ENCODE measurements at regions of chr1 and their contacts with region 1.

Region 1: GRCh38 chr1:89085781-89086180 is 20.8 kb upstream of the GBP1 start:
- DNase-seq: peak; percentile 64
- CTCF ChIP-seq: peak; percentile 70

Region 2: DNA sequence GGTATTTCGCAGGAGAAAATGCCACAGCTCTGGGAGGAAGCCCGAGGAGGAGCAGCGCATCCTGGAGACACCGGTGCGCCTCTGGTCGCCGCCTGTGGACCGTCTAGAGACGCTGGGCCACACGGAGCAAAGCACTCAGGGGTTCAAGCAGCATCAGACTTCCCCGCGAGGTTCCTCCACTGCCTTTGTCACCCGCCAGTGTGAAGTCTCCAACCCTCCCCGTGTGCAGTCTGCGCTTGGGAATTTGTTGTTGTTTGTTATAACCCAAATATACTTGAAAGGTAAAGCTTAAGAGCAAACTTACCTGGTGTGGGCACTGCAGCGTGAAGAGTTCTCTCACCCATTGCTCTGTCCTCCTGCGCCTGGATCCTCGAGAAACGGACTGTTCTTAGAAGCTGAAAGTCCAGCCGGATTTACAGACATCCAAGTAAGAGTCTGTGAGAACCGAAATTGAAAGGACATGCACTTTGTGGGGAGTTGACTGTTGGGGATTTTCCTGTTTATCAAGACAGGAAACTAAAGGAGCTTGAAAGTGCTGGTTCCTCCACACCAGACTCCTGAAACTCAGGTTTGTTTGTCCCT is 112.8 kb after region 1 on chr1 and contains the start of gene GBP4:
- in situ Hi-C with region 1: no loop called
- DNase-seq: peak; percentile 45
- CTCF ChIP-seq: no peak

Region 3: DNA sequence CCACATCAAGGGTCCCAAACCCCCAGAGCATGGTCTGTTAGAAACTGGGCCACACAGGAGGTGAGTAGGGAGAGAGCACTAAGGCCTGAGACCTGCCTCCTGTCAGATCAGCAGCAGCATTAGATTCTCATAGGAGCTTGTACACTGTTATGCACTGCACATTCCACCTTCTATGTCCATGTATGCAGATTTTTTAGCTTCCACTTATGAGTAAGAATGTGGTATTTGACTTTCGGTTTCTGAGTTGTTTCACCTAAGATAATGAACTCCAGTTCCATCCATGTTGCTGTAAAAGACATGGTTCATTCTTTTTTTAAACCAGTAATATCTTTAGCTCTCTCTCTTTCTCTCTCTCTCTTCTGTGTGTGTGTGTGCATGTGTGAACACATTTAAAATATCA is 277.4 kb after region 1 on chr1:
- in situ Hi-C with region 1: loop called (anchors 10 kb)
- DNase-seq: peak; percentile 12
- CTCF ChIP-seq: no peak

Region 4: GRCh38 chr1:89454845-89455521 is 369.2 kb after region 1 on chr1:
- in situ Hi-C with region 1: loop called (anchors 25 kb)
- DNase-seq: peak; percentile 38
- CTCF ChIP-seq: peak; percentile 62

Measured in GM13977 (cell line).